ENCODE measurements at regions of chr7 and their contacts with region 1.

Region 1: GRCh38 chr7:140902303-140902953 is 22.3 kb downstream of the BRAF start:
- DNase-seq: peak in 4 of 10 donors; percentile 22 to 68 (median 48)
- ATAC-seq: peak; percentile 79 to 81
- H3K4me3 Mint-ChIP-seq: peak overlapping the region; percentile 56 to 83 (median 73)
- H3K27ac Mint-ChIP-seq: peak overlapping the region; percentile 39 to 95 (median 86)
- H3K4me1 Mint-ChIP-seq: peaks cover 13 to 75% (median 61%) of the 10 kb centered on the region in 4 donors
- H3K27me3 Mint-ChIP-seq: no peaks in the 10 kb centered on the region

Region 2: GRCh38 chr7:140752533-140752932 is 149.9 kb before region 1 on chr7:
- POLR2A ChIA-PET with region 1: no interaction called
- DNase-seq: no peak
- ATAC-seq: no peak
- H3K4me3 Mint-ChIP-seq: no peak overlapping the region
- H3K27ac Mint-ChIP-seq: peak overlapping the region in 2 of 10 donors; percentile 46 to 59
- H3K4me1 Mint-ChIP-seq: no peaks in the 10 kb centered on the region
- H3K27me3 Mint-ChIP-seq: no peaks in the 10 kb centered on the region

Region 3: DNA sequence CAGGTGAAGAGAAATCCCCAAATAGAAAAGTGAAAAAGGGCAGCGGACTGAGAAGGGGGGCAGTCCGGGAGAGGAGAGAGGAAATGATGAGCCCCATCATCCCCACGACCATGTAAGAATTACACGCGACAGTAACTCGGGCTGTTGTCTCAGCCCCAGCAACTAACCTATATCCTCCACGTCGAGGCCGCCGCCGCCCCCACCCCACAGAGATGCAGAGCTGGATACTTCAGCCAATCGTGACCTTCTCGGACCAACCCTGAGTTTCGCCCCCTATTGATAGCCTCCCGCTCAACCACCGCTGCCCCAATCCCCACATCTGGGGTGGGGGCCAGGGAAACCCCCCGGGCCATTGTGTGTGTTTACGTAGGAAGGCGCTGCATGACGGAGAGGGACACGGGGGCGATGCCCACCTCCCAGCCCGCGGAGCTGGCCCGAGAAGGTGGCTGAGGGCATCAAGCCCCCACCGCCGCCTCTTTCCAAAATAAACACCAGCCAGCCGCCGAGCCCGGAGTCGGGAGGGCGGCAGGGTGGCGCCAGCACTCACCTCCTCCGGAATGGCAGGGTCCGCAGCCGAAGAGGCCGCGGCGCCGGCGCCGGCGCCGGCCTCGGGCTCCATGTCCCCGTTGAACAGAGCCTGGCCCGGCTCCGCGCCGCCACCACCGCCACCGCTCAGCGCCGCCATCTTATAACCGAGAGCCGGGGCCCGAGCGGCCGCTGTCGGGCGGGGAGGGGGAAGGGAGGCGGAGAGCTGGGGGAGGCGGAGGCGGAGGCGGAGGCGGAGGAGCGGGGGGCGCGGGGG is 21.8 kb after region 1 on chr7:
- POLR2A ChIA-PET with region 1: interaction called, 10 read pairs
- DNase-seq: peak; percentile 63 to 88 (median 82)
- ATAC-seq: peak; percentile 77 to 81
- H3K4me3 Mint-ChIP-seq: no peak overlapping the region
- H3K27ac Mint-ChIP-seq: no peak overlapping the region
- H3K4me1 Mint-ChIP-seq: peaks cover 10 to 26% (median 23%) of the 10 kb centered on the region in 4 donors
- H3K27me3 Mint-ChIP-seq: no peaks in the 10 kb centered on the region

Measured in naive thymus-derived CD8-positive, alpha-beta T cell (primary cell).